ENCODE measurements at regions of chr16 and their contacts with region 1.

Region 1: GRCh38 chr16:72664509-72665225 is 383.3 kb downstream of the ZFHX3 start:
- DNase-seq: peak; percentile 79 to 95 (median 94)
- ATAC-seq: peak; percentile 100
- H3K4me3 ChIP-seq: peak overlapping the region; percentile 73
- H3K4me3 Mint-ChIP-seq: peak overlapping the region; percentile 93 to 100 (median 100)
- H3K27ac ChIP-seq: peak overlapping the region; percentile 72
- H3K27ac Mint-ChIP-seq: peak overlapping the region; percentile 86 to 98 (median 97)
- H3K4me1 ChIP-seq: peaks cover 11 to 13% of the 10 kb centered on the region in 2 donors
- H3K4me1 Mint-ChIP-seq: peaks cover 4 to 24% (median 18%) of the 10 kb centered on the region in 7 donors
- H3K27me3 ChIP-seq: no peaks in the 10 kb centered on the region
- H3K27me3 Mint-ChIP-seq: peaks cover 0 to 16% (median 10%) of the 10 kb centered on the region in 5 donors

Region 2: GRCh38 chr16:71461686-71462648 is 1202.7 kb before region 1 on chr16 and contains the start of gene ZNF23:
- CTCF ChIA-PET with region 1: no interaction called
- POLR2A ChIA-PET with region 1: no interaction called
- intact Hi-C with region 1: loop called in 1 of 2 experiments (anchors 10 kb)
- DNase-seq: peak; percentile 53 to 84 (median 72)
- ATAC-seq: peak; percentile 99
- H3K4me3 ChIP-seq: peak within 1 kb of the TSS; percentile 92
- H3K4me3 Mint-ChIP-seq: peak within 1 kb of the TSS; percentile 88 to 97 (median 94)
- H3K27ac ChIP-seq: peak within 1 kb of the TSS; percentile 87
- H3K27ac Mint-ChIP-seq: peak within 1 kb of the TSS; percentile 85 to 98 (median 92)
- H3K4me1 ChIP-seq: peaks cover 4 to 6% of the 10 kb centered on the region in 2 donors
- H3K4me1 Mint-ChIP-seq: peaks cover 13 to 39% (median 27%) of the 10 kb centered on the region in 7 donors
- H3K27me3 ChIP-seq: no peaks in the 10 kb centered on the region
- H3K27me3 Mint-ChIP-seq: no peaks in the 10 kb centered on the region
- total RNA-seq, gene ZNF23: 6.5 to 16.0 (median 8.8) TPM

Region 3: DNA sequence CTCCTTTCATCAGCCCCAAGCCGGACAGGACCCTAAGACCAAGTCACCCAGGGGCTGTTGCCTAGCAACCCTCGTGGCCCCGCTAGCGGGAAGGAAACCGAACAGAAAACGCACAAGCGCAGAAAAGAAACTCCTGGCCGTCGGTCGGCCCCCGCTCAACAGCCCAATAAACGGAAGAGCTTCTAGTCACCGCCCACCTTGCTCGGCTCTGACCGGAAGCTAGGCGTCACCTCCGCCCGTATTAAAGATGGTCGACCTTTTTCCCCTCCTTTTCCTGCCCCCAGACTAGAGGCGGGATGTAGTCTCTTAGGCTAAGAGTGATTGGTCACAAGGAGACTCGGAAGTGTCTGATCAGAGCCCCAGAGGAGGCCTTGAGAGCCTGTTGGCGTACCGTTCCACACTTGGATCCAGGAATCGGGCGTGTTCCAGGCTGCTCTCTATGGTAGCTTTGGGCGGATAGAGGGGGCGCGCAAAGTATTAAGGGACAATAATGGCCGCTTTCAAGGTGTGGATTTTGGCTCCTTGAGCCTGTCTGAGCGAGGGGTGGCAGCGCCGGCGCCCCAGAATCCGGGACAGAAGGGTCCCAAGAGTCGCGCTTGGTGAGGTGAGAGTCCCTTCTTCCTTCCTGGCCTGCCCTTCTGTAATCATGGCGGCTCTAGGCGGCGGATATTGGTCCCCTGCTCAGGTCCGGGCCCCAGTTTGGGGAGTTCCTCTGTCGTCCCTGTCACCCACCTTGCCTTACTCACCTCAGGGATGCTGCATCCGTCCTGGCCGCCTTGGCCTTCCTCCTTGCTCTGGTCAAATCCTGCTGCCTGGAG is 571.0 kb before region 1 on chr16 and contains the starts of genes DHX38 and TXNL4B:
- CTCF ChIA-PET with region 1: no interaction called
- POLR2A ChIA-PET with region 1: no interaction called
- intact Hi-C with region 1: loop called (anchors 1 to 2 kb)
- DNase-seq: peak; percentile 70 to 95 (median 92)
- ATAC-seq: peak; percentile 98
- H3K4me3 ChIP-seq: peak within 1 kb of the TSS; percentile 86
- H3K4me3 Mint-ChIP-seq: peak within 1 kb of the TSS; percentile 94 to 100 (median 98)
- H3K27ac ChIP-seq: peak within 1 kb of the TSS; percentile 93
- H3K27ac Mint-ChIP-seq: peak within 1 kb of the TSS; percentile 92 to 100 (median 99)
- H3K4me1 ChIP-seq: peaks cover 21 to 24% of the 10 kb centered on the region in 2 donors
- H3K4me1 Mint-ChIP-seq: peaks cover 33 to 70% (median 63%) of the 10 kb centered on the region in 7 donors
- H3K27me3 ChIP-seq: no peaks in the 10 kb centered on the region
- H3K27me3 Mint-ChIP-seq: no peaks in the 10 kb centered on the region
- total RNA-seq, gene DHX38: 90.1 to 113 (median 104) TPM
- total RNA-seq, gene TXNL4B: 12.5 to 20.9 (median 18.5) TPM

Region 4: GRCh38 chr16:72787514-72788268 is 123.0 kb after region 1 on chr16:
- CTCF ChIA-PET with region 1: no interaction called
- POLR2A ChIA-PET with region 1: no interaction called
- intact Hi-C with region 1: loop called (anchors 1 kb)
- DNase-seq: peak; percentile 19 to 68 (median 46)
- ATAC-seq: peak; percentile 86
- H3K4me3 ChIP-seq: peak overlapping the region; percentile 58
- H3K4me3 Mint-ChIP-seq: peak overlapping the region; percentile 85 to 92 (median 88)
- H3K27ac ChIP-seq: no peak overlapping the region
- H3K27ac Mint-ChIP-seq: peak overlapping the region in 8 of 9 donors; percentile 28 to 79 (median 68)
- H3K4me1 ChIP-seq: no peaks in the 10 kb centered on the region
- H3K4me1 Mint-ChIP-seq: peaks cover 9 to 32% (median 14%) of the 10 kb centered on the region in 7 donors
- H3K27me3 ChIP-seq: peaks cover 0 to 11% of the 10 kb centered on the region in 2 donors
- H3K27me3 Mint-ChIP-seq: peaks cover 11 to 50% (median 32%) of the 10 kb centered on the region in 5 donors

Region 5: DNA sequence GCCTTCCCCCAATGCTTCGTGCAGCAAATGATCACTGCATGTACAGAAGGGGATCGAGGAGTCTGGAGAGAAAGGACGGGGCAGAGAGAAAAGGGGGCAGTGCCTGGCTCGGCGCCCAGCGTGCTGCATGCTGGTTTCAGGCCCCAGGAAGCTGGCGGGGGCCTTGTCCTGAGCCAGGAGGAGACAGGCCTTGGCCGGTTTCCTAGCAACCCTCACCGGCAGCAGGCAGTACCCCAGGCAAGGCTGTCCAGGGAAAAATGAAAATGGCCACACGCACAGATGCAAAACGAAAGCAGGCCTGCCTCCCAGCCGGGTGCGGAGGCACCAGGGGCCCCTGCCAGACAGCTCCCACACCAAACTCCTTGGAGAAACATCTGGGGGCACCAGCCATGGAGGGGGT is 257.0 kb after region 1 on chr16:
- CTCF ChIA-PET with region 1: no interaction called
- POLR2A ChIA-PET with region 1: no interaction called
- intact Hi-C with region 1: loop called in 1 of 2 experiments (anchors 2 kb)
- DNase-seq: no peak
- ATAC-seq: no peak
- H3K4me3 ChIP-seq: no peak overlapping the region
- H3K4me3 Mint-ChIP-seq: peak overlapping the region in 8 of 10 donors; percentile 12 to 81 (median 68)
- H3K27ac ChIP-seq: no peak overlapping the region
- H3K27ac Mint-ChIP-seq: peak overlapping the region in 4 of 9 donors; percentile 26 to 86 (median 68)
- H3K4me1 ChIP-seq: no peaks in the 10 kb centered on the region
- H3K4me1 Mint-ChIP-seq: peaks cover 6 to 29% (median 11%) of the 10 kb centered on the region in 7 donors
- H3K27me3 ChIP-seq: peaks cover 0 to 2% of the 10 kb centered on the region in 2 donors
- H3K27me3 Mint-ChIP-seq: peaks cover 0 to 18% (median 0%) of the 10 kb centered on the region in 5 donors

Region 6: DNA sequence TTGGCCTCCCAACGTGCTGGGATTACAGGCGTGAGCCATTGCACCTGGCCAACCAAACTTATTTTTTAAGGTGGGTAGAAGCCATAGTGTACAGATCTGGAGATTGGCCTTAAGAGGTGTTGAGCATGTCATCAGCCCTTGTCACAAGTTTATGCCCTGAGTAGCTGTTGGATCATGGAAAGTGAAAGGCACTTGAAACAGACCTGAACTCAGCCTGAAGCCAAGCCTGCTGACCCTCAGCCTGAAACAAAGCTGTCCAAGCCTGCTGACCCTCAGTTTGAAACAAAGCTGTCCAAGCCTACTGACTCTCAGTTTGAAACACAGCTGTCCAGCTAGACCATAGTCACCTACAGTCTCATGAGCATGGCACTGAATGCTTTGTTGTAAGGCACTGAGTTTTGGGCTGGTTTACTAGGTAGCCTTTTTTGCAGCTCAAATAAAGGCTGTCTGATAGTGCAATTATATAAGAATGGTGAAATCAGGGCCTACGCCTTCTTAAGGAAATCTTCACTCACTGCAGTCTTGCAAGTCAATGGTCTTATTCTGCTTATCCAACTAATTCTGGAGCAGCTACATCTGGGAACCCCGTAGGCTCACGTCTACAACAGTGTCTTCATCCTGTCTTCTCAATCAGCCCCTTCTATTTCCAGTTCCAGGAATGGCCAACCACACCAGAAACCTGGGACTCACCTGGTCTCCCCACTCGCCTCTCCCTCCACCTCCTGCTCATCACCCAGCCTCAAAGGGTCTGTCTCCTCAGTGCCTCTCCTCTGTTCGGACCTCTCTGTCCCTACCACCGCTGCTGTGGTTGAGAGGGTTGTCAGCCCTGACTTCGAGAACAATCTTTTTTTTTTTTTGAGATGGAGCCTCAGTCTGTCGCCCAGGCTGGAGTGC is 1708.5 kb after region 1 on chr16:
- CTCF ChIA-PET with region 1: no interaction called
- POLR2A ChIA-PET with region 1: no interaction called
- intact Hi-C with region 1: loop called in 1 of 2 experiments (anchors 5 kb)
- DNase-seq: no peak
- ATAC-seq: no peak
- H3K4me3 ChIP-seq: no peak overlapping the region
- H3K4me3 Mint-ChIP-seq: no peak overlapping the region
- H3K27ac ChIP-seq: no peak overlapping the region
- H3K27ac Mint-ChIP-seq: peak overlapping the region in 2 of 9 donors; percentile 18 to 86
- H3K4me1 ChIP-seq: no peaks in the 10 kb centered on the region
- H3K4me1 Mint-ChIP-seq: peaks cover 0 to 4% (median 0%) of the 10 kb centered on the region in 7 donors
- H3K27me3 ChIP-seq: no peaks in the 10 kb centered on the region
- H3K27me3 Mint-ChIP-seq: no peaks in the 10 kb centered on the region